ENCODE measurements at regions of chr12 and their contacts with region 1.

Region 1: DNA sequence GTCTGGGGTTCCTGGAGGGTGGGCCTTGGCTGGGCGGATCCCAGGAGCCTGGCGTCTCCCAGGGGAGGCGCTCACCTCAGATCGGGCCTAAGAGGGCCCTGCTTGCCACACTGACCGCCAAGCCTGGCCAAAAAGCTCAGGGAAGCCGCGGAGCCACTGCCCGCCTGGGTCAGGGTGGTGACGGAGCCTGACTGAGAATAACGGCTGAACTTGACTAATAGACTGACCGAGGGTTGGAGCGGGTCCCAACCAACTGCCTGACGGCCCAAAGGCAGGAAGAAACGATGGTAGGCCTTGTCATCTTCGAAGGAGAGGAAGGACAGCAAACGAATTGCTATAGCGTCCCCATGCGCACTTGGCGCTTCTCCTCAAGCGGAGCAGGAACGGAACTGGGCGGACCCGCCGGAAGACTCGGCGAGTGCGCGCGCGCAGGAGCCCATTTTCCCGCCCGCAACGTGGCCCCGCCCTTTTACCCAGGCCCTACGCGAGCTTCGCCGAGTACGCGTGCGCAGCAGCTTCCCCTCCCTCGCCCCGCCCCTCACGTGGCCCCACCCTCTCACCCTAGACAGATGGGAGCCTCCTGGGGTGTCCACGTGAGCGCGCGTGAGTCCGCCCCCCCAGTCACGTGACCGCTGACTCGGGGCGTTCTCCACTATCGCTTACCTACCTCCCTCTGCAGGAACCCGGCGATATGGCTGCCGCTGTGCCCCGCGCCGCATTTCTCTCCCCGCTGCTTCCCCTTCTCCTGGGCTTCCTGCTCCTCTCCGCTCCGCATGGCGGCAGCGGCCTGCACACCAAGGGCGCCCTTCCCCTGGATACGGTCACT is at the starts of genes ERP29 and TMEM116:
- DNase-seq: peak; percentile 91 to 98
- H3K4me3 ChIP-seq: peak within 1 kb of the TSS; percentile 86
- H3K27ac ChIP-seq: peak within 1 kb of the TSS; percentile 88
- H3K4me1 ChIP-seq: peaks cover 36% of the 10 kb centered on the region
- H3K27me3 ChIP-seq: no peaks in the 10 kb centered on the region
- CTCF ChIP-seq: peak; percentile 68
- total RNA-seq, gene ERP29: 131 and 154 TPM in 2 replicates
- total RNA-seq, gene TMEM116: 21.9 and 23.4 TPM in 2 replicates

Region 2: DNA sequence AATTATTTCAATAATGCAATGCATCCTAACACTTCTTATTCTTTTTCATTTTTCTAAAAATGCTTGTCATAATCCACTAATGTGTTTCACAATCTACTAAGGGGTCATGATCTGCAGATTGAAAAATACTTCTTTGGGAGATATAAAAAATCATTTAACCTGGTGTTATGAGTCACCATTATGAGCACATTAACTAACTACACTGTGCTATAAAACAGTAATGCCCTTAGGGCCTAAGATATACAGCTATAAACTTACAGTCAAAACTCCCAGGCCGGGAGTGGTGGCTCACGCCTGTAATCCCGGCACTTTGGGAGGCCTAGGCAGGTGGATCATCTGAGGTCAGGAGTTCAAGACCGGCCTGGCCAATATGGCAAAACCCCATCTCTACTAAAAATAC is 428.0 kb before region 1 on chr12:
- CTCF ChIA-PET with region 1: no interaction called
- POLR2A ChIA-PET with region 1: no interaction called
- intact Hi-C with region 1: no loop called
- DNase-seq: peak in 1 of 2 experiments; percentile 90
- H3K4me3 ChIP-seq: no peak overlapping the region
- H3K27ac ChIP-seq: peak overlapping the region; percentile 35
- H3K4me1 ChIP-seq: peaks cover 9% of the 10 kb centered on the region
- H3K27me3 ChIP-seq: no peaks in the 10 kb centered on the region
- CTCF ChIP-seq: no peak

Region 3: DNA sequence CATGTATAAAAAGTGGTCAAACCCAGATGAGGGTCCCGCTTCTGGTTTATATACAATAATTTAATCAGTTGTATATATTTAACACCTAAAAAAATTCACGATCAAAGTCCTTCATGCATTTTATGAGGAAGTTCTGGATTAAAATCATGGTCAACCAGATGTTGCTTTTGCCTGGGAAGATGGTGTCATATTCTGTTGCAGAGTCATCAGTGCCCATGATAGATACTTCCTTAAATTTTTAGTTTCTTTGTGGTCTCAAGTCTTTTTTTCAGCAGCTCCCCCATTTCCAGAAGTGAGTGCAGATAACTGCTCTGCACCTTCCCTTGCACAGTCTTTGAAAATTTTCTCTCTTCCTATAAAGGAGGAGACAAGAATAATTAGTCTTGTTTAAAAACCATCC is 16.3 kb after region 1 on chr12:
- CTCF ChIA-PET with region 1: no interaction called
- POLR2A ChIA-PET with region 1: no interaction called
- intact Hi-C with region 1: no loop called
- DNase-seq: no peak
- H3K4me3 ChIP-seq: no peak overlapping the region
- H3K27ac ChIP-seq: no peak overlapping the region
- H3K4me1 ChIP-seq: no peaks in the 10 kb centered on the region
- H3K27me3 ChIP-seq: no peaks in the 10 kb centered on the region
- CTCF ChIP-seq: no peak

Region 4: GRCh38 chr12:112418608-112419298 is 405.8 kb after region 1 on chr12 and contains the start of gene PTPN11:
- CTCF ChIA-PET with region 1: no interaction called
- POLR2A ChIA-PET with region 1: no interaction called
- intact Hi-C with region 1: loop called (anchors 5 kb)
- DNase-seq: peak; percentile 56 to 88
- H3K4me3 ChIP-seq: peak within 1 kb of the TSS; percentile 96
- H3K27ac ChIP-seq: peak within 1 kb of the TSS; percentile 82
- H3K4me1 ChIP-seq: peaks cover 13% of the 10 kb centered on the region
- H3K27me3 ChIP-seq: no peaks in the 10 kb centered on the region
- CTCF ChIP-seq: peak; percentile 56; the same call in 1 of the 2 replicates
- total RNA-seq, gene PTPN11: 91.2 and 113 TPM in 2 replicates